H1 (cell line): ENCODE measurements at regions of chr22 and their contacts with region 1.

Region 1: GRCh38 chr22:36123673-36124630 is 36.6 kb downstream of the APOL3 start:
- DNase-seq: peak; percentile 87 to 93
- H3K4me3 ChIP-seq: no peak overlapping the region; a peak in 1 of 8 replicates
- H3K27ac ChIP-seq: no peak overlapping the region
- H3K4me1 ChIP-seq: peaks cover 0 to 2% (median 0%) of the 10 kb centered on the region in 4 experiments; a peak in 1 of 7 replicates
- H3K27me3 ChIP-seq: peaks cover 0 to 6% (median 2%) of the 10 kb centered on the region in 4 experiments; a peak in 2 of 7 replicates
- CTCF ChIP-seq: peak; percentile 97 to 98 (median 98)
- EP300 ChIP-seq: no peak
- POLR2A ChIP-seq: no peak
- RAD21 ChIP-seq: peak; percentile 100

Region 2: GRCh38 chr22:35930933-35931332 is 193.0 kb before region 1 on chr22:
- CTCF ChIA-PET with region 1: interaction called, 12 read pairs
- POLR2A ChIA-PET with region 1: no interaction called
- DNase-seq: no peak
- H3K4me3 ChIP-seq: no peak overlapping the region
- H3K27ac ChIP-seq: no peak overlapping the region
- H3K4me1 ChIP-seq: peaks cover 0 to 2% (median 0%) of the 10 kb centered on the region in 4 experiments; a peak in 1 of 7 replicates
- H3K27me3 ChIP-seq: no peaks in the 10 kb centered on the region
- CTCF ChIP-seq: peak in 2 of 3 experiments; percentile 54 to 62; a peak in 3 of 4 replicates
- EP300 ChIP-seq: no peak
- POLR2A ChIP-seq: no peak
- RAD21 ChIP-seq: peak; percentile 73 to 79

Region 3: DNA sequence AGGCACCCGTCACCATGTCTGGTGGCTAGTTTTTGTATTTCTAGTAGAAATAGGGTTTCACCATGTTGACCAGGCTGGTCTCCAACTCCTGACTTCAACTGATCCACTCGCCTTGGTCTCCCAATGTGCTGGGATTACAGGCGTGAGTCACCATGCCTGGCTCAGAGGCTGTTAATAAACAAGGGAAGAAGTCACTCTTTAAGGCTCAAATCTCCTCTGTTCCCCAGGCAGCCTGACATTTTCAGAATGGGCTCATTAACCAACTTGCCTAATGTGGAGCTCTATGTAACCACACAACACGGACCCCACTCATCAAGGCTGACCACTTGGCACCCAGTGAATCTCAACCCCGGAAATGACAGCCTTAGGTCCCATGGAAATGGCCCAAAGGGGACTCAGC is 12.5 kb after region 1 on chr22:
- CTCF ChIA-PET with region 1: interaction called, 11 read pairs
- POLR2A ChIA-PET with region 1: interaction called, 3 read pairs
- DNase-seq: no peak
- H3K4me3 ChIP-seq: no peak overlapping the region
- H3K27ac ChIP-seq: no peak overlapping the region
- H3K4me1 ChIP-seq: peaks cover 0 to 6% (median 4%) of the 10 kb centered on the region in 4 experiments; a peak in 5 of 7 replicates
- H3K27me3 ChIP-seq: no peaks in the 10 kb centered on the region; a peak in 1 of 7 replicates
- CTCF ChIP-seq: no peak
- EP300 ChIP-seq: no peak
- POLR2A ChIP-seq: no peak
- RAD21 ChIP-seq: no peak